ENCODE measurements at regions of chr20 and their contacts with region 1.

Region 1: DNA sequence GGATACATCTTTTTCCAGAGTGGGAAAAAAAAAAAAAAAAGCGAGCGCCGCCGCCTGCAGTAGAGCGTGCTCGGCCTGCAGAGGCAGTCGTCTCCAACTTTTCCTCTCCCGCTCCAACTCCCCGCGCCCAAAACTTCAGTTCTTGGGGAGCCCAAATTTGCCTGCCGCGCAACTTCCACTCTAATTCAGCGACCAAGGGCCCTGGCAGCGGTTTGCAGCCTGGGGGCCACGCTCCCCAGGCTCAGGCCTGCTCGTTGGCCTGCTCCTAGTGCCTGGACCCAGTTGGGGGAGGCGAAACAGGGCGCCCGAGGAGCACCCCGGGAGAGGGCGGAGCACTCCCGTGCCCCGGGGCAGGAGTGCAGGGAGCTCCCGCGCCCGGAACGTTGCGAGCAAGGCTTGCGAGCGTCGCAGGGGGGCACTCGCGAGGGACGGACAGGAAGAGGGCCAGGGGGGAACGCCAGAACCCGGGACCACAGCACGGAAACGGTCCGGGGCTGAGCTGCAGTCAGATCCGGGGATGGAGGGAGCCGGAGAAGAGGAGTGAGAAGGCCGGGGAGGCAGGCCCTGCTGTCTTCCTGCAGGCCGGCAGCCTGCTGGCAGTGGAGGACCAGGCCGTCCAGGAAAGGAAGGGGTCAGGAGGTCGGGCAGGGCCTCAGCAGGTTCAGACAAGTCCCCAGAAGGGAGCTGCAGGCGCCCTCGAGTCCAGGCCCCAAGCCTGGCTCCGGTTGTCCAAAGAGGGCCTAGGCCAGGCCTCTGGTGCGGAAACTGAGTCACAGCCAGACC is at the start of gene STX16:
- DNase-seq: peak; percentile 95
- ATAC-seq: peak; percentile 84
- H3K4me3 Mint-ChIP-seq: peak within 1 kb of the TSS; percentile 100
- H3K27ac Mint-ChIP-seq: peak within 1 kb of the TSS; percentile 100
- H3K4me1 Mint-ChIP-seq: peaks cover 19% of the 10 kb centered on the region
- H3K27me3 Mint-ChIP-seq: no peaks in the 10 kb centered on the region
- total RNA-seq, gene STX16: 101 to 110 TPM

Region 2: GRCh38 chr20:57391074-57391554 is 1259.9 kb before region 1 on chr20 and contains the start of gene RBM38:
- CTCF ChIA-PET with region 1: no interaction called
- POLR2A ChIA-PET with region 1: no interaction called
- intact Hi-C with region 1: loop called in 1 of 2 experiments (anchors 2 kb)
- DNase-seq: peak; percentile 91
- ATAC-seq: peak; percentile 60
- H3K4me3 Mint-ChIP-seq: peak within 1 kb of the TSS; percentile 83
- H3K27ac Mint-ChIP-seq: peak within 1 kb of the TSS; percentile 97
- H3K4me1 Mint-ChIP-seq: peaks cover 44% of the 10 kb centered on the region
- H3K27me3 Mint-ChIP-seq: no peaks in the 10 kb centered on the region
- total RNA-seq, gene RBM38: 96.5 to 101 TPM

Region 3: DNA sequence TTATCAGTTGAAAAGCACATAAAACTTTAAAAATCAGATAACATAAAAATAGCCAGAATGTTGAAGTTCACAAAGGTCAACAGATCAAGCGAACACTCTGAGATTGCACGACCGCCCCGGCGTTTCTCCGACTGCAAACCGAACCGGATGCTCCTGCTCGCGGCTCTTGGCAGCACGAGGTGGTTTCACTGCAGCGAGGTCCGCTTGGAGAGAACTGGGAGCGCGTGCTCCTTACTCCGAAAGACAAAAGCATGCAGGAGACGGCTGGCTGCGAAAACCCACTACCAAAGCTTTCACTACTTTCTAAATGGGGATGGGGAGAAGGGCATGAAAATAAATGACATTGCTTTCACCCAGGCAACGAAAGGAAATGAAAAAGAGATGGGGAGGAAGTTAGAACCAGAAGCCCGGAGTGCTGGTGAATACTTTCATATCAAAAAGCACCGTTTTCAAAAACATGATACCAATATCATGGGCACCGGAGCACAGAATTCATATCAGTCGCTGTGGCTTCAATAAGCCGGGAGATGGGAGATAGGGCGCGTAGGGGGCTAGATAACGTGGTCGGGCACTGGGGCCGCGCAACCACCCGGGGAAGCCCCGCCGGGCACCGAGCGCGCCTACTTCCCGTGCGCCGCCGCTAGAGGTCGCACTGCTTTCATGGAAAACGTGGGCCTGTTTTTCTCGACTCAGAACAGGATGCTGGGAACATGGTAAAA is 414.2 kb before region 1 on chr20:
- CTCF ChIA-PET with region 1: interaction called, 4 read pairs
- POLR2A ChIA-PET with region 1: interaction called, 5 read pairs
- intact Hi-C with region 1: loop called (anchors 1 to 2 kb)
- DNase-seq: peak; percentile 93
- ATAC-seq: peak; percentile 90
- H3K4me3 Mint-ChIP-seq: peak overlapping the region; percentile 81
- H3K27ac Mint-ChIP-seq: peak overlapping the region; percentile 92
- H3K4me1 Mint-ChIP-seq: peaks cover 32% of the 10 kb centered on the region
- H3K27me3 Mint-ChIP-seq: no peaks in the 10 kb centered on the region

Region 4: GRCh38 chr20:58481481-58482021 is 169.4 kb before region 1 on chr20:
- CTCF ChIA-PET with region 1: interaction called, 5 read pairs
- POLR2A ChIA-PET with region 1: no interaction called
- intact Hi-C with region 1: loop called (anchors 1 to 5 kb)
- DNase-seq: peak; percentile 82
- ATAC-seq: peak; percentile 78
- H3K4me3 Mint-ChIP-seq: no peak overlapping the region
- H3K27ac Mint-ChIP-seq: no peak overlapping the region
- H3K4me1 Mint-ChIP-seq: no peaks in the 10 kb centered on the region
- H3K27me3 Mint-ChIP-seq: peaks cover 15% of the 10 kb centered on the region

Region 5: DNA sequence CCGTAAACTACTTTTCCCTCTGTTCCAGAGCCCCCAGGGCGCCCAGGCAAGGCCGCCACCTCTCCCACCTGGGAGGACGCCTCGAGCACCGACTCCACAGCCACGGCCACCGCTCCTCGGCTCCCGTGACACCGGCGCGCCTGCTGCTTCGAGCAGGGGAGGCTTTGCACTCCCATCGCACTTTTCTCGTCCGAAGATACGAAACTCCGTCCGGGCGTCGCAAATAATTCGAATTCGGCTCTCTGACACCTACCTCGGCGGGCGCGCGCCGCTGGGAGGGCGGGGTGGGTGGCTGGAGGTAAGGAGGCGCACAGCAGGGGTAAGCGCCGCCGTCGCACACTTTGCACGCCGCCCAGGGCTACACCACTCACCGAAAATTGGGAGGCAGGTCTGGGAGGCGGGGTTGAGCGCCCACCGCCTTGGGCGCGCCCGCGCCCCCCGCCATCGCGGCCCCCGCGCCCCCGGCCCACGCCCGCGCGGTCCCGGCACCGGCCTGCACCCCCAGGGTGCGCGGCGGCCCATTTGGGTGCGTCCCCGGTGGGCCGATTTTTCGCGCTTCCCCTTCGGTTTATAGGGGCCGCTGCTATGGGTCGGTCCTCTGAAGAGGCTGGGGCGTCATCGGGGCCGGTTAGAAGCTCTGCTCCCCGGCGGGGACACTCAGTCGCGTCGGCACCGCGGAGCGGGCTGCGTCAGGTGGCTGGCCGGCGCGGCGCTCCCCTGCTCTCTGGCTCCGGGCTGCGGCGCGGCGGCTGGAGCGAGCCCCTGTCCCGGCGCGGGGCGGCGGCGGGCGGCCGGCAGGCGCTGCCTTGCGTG is 237.8 kb after region 1 on chr20:
- CTCF ChIA-PET with region 1: no interaction called
- POLR2A ChIA-PET with region 1: interaction called, 6 read pairs
- intact Hi-C with region 1: loop called (anchors 1 to 2 kb)
- DNase-seq: peak; percentile 91
- ATAC-seq: peak; percentile 58
- H3K4me3 Mint-ChIP-seq: peak overlapping the region; percentile 88
- H3K27ac Mint-ChIP-seq: peak overlapping the region; percentile 47
- H3K4me1 Mint-ChIP-seq: peaks cover 29% of the 10 kb centered on the region
- H3K27me3 Mint-ChIP-seq: no peaks in the 10 kb centered on the region

Region 6: DNA sequence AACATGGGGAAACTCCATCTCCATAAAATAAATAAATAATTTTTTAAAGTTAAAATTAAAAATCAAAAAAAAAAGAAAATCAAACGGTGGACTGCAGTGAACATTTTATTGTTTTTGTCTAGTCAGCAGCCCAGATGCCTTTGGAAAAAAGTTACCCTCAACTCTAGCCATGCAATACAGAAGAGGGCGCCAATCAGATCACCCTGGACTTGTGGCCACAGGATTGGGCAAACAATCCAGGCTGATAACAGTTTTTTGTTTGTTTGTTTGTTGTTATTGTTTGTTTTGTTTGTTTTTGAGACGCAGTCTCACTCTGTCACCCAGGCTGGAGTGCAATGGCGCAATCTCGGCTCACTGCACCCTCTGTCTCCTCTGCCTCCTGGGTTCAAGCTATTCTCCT is 299.6 kb after region 1 on chr20:
- CTCF ChIA-PET with region 1: no interaction called
- POLR2A ChIA-PET with region 1: no interaction called
- intact Hi-C with region 1: no loop called
- DNase-seq: no peak
- ATAC-seq: no peak
- H3K4me3 Mint-ChIP-seq: no peak overlapping the region
- H3K27ac Mint-ChIP-seq: no peak overlapping the region
- H3K4me1 Mint-ChIP-seq: no peaks in the 10 kb centered on the region
- H3K27me3 Mint-ChIP-seq: peaks cover 7% of the 10 kb centered on the region

Region 7: DNA sequence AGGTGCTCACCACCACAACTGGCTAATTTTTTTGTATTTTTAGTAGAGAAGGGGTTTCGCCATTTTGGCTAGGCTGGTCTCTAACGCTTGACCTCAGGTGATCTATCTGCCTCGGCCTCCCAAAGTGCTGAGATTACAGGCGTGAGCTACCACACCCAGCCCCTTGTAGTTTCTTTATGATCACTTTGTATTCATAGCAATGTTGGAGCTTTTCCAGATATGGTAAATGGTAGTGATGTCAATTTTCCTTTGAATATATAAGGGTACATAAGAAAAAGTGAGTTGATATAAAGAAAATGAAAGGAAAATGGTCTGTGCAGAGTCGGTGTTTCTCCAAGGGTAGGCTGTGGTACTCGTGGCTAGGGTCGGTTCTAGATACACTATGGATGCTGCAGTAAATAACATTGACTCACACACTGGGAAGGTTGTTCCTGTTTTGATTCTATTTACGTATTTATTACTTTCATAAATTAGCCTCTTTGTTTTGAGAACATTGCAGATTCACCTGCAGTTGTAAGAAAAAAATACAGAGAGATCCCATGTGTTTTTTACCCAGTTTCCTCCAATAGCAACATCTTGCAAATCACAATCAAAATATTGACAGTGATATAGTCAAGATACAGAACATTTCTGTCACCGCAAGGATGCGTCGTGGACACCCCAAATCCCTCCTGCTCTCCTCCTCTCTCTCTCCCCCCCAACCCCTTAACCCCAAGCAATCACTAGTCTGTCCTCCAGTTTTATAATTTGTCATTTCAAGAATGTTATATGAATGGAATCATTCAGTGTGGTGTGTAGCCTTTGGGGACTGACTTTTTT is 515.1 kb after region 1 on chr20:
- CTCF ChIA-PET with region 1: no interaction called
- POLR2A ChIA-PET with region 1: no interaction called
- intact Hi-C with region 1: loop called in 1 of 2 experiments (anchors 5 kb)
- DNase-seq: peak; percentile 62
- ATAC-seq: peak; percentile 69
- H3K4me3 Mint-ChIP-seq: peak overlapping the region; percentile 76
- H3K27ac Mint-ChIP-seq: peak overlapping the region; percentile 94
- H3K4me1 Mint-ChIP-seq: peaks cover 89% of the 10 kb centered on the region
- H3K27me3 Mint-ChIP-seq: no peaks in the 10 kb centered on the region